ENCODE measurements at regions of chr15 and their contacts with region 1.

Region 1: DNA sequence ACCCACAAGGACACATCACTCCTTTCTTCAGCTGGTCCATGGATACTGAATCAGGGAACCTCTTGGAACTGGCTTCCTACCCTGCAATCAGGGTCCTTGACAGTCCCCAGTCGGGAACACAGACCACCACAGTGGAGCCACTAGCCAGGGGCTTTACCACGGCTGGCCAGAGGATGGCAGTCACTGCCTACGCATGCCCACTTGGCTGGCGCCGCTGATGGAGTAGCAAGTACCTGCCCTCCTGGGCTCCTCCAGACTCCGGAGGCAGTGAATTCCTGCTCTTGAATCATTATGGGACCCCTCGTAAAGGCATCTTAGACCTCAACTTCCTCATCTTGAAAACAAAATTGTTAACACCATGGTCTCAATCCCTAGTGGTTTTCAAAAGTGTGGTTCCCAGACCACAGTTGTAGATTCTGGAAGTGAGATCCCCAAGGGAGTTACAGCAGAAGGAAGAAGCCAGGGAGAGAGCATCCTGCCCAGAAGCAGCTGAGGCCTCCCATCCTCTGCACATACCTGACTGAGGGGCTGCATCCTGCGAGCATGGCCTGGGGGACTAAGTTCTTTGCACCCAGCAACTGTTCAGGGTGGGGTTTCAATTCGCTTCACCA is 9.1 kb upstream of the SKIC8 start:
- DNase-seq: peak; percentile 74
- H3K4me3 ChIP-seq: no peak overlapping the region
- H3K27ac ChIP-seq: no peak overlapping the region
- H3K4me1 ChIP-seq: peaks cover 4% of the 10 kb centered on the region
- CTCF ChIP-seq: peak; percentile 92

Region 2: GRCh38 chr15:78259232-78259631 is 49.3 kb before region 1 on chr15:
- CTCF ChIA-PET with region 1: no interaction called
- POLR2A ChIA-PET with region 1: no interaction called
- intact Hi-C with region 1: no loop called
- DNase-seq: no peak
- H3K4me3 ChIP-seq: no peak overlapping the region
- H3K27ac ChIP-seq: no peak overlapping the region
- H3K4me1 ChIP-seq: no peaks in the 10 kb centered on the region
- CTCF ChIP-seq: no peak

Region 3: GRCh38 chr15:78415286-78415685 is 106.8 kb after region 1 on chr15:
- CTCF ChIA-PET with region 1: no interaction called
- POLR2A ChIA-PET with region 1: no interaction called
- intact Hi-C with region 1: loop called (anchors 2 kb)
- DNase-seq: no peak
- H3K4me3 ChIP-seq: no peak overlapping the region
- H3K27ac ChIP-seq: no peak overlapping the region
- H3K4me1 ChIP-seq: no peaks in the 10 kb centered on the region
- CTCF ChIP-seq: peak; percentile 46

Region 4: DNA sequence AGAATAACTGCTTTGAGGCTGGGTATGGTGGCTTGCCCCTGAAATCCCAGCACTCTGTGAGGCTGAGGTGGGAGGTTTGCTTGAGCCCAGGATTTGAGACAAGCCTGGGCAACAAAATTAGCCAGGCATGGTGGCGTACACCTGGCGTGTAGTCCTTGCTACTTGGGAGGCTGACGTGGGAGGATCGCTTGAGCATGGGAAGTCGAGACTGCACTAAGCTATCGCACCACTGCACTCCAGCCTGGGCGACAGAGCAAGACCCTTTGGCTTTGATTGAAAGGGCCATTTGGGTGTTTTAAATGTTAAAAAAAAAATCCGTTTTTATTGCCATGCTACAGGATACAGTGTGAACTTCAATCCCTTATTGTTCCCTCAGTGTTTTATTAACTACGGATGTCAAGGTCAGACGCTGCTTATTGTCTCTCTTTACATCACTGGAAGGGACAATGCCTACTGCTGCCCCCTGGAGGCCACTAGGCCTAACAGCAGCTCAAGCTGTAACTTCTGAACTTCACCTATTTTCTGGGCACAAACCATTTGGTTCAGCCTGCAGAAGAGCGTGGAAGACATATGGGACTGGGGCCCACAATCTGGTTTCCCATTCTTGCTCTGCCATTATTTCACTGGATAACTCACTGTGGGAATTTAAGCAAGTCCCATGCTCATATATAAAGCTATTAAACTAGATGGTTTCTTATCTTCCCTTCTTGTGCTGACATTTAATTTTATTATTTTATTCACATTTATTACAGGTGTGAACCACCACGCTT is 114.2 kb after region 1 on chr15:
- CTCF ChIA-PET with region 1: interaction called, 4 read pairs
- POLR2A ChIA-PET with region 1: no interaction called
- intact Hi-C with region 1: loop called (anchors 1 kb)
- DNase-seq: peak; percentile 63
- H3K4me3 ChIP-seq: no peak overlapping the region
- H3K27ac ChIP-seq: no peak overlapping the region
- H3K4me1 ChIP-seq: peaks cover 5% of the 10 kb centered on the region
- CTCF ChIP-seq: peak; percentile 96

Region 5: GRCh38 chr15:78481917-78482316 is 173.4 kb after region 1 on chr15:
- CTCF ChIA-PET with region 1: no interaction called
- POLR2A ChIA-PET with region 1: no interaction called
- intact Hi-C with region 1: loop called (anchors 2 kb)
- DNase-seq: no peak
- H3K4me3 ChIP-seq: no peak overlapping the region
- H3K27ac ChIP-seq: no peak overlapping the region
- H3K4me1 ChIP-seq: no peaks in the 10 kb centered on the region
- CTCF ChIP-seq: no peak

Region 6: GRCh38 chr15:78492872-78493271 is 184.3 kb after region 1 on chr15:
- CTCF ChIA-PET with region 1: no interaction called
- POLR2A ChIA-PET with region 1: no interaction called
- intact Hi-C with region 1: no loop called
- DNase-seq: no peak
- H3K4me3 ChIP-seq: no peak overlapping the region
- H3K27ac ChIP-seq: no peak overlapping the region
- H3K4me1 ChIP-seq: no peaks in the 10 kb centered on the region
- CTCF ChIP-seq: no peak

Region 7: DNA sequence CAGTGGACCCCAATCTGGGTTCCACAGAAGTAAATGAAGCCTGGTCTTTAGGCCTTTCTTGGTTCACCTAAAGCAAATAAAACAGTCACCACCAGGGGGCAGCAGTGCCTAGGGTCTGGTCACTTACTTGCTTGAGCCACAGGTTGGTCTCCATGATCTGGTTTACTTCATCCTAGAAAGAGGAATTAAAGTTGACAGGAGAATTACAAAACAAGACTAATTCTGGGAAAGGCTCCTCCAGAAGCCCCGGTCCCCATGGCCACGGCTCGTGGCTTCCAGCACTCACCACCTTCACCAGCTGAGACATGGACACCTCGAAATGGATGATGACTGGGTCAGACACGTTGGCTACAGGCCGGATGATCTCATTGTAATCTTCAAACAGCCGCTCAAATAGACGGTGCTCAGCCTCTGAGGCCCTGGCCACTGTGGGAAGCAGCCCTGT is 310.0 kb after region 1 on chr15:
- CTCF ChIA-PET with region 1: no interaction called
- POLR2A ChIA-PET with region 1: no interaction called
- intact Hi-C with region 1: loop called (anchors 5 kb)
- DNase-seq: peak; percentile 83
- H3K4me3 ChIP-seq: no peak overlapping the region
- H3K27ac ChIP-seq: no peak overlapping the region
- H3K4me1 ChIP-seq: no peaks in the 10 kb centered on the region
- CTCF ChIP-seq: peak; percentile 96

Region 8: GRCh38 chr15:78709263-78709882 is 400.8 kb after region 1 on chr15:
- CTCF ChIA-PET with region 1: interaction called, 3 read pairs
- POLR2A ChIA-PET with region 1: no interaction called
- intact Hi-C with region 1: loop called (anchors 2 kb)
- DNase-seq: peak; percentile 70
- H3K4me3 ChIP-seq: no peak overlapping the region
- H3K27ac ChIP-seq: no peak overlapping the region
- H3K4me1 ChIP-seq: peaks cover 5% of the 10 kb centered on the region
- CTCF ChIP-seq: peak; percentile 90

Measured in OCI-LY7 (cell line).